Adrenal gland (tissue), 19 donors: ENCODE measurements at regions of chr2 and their contacts with region 1.

Region 1: DNA sequence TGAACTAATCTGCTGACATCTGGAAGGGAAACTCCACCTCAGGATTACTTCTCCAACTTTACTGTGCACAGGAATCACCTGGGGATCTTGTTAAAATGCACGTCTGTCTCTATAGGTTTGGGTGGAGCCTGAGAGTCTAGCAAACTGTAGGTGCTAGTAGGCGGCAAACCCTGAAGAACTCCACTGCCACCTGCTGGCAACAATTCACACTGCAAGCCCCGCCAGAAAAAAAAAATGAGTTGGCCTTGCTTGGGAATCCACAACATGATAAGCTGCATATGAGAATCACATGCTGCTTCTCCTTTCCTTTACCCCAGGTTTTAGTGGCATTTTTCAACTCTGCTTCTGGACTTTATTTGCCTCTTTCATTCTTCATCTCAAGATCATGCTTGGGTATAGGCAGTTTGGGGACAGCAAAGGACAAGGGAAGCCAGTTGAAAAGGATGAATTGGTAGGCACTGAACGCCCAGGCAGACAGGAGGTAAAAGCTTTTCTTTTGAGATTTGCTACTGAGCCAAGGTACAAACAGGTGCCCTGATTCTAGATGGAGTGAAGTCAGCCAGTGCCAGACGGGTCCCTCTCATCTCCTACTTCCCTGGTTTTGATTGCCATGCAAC is 88.8 kb downstream of the VIT start:
- DNase-seq: peak; percentile 46 to 85 (median 64)
- H3K4me3 ChIP-seq: no peak overlapping the region
- H3K27ac ChIP-seq: no peak overlapping the region
- H3K4me1 ChIP-seq: no peaks in the 10 kb centered on the region
- H3K27me3 ChIP-seq: peaks cover 4% of the 10 kb centered on the region
- CTCF ChIP-seq: peak; percentile 86 to 97 (median 90)
- POLR2A ChIP-seq: no peak

Region 2: GRCh38 chr2:36993841-36994620 is 208.7 kb after region 1 on chr2:
- intact Hi-C with region 1: loop called in 1 of 2 experiments (anchors 10 kb)
- DNase-seq: no peak
- H3K4me3 ChIP-seq: no peak overlapping the region
- H3K27ac ChIP-seq: no peak overlapping the region
- H3K4me1 ChIP-seq: no peaks in the 10 kb centered on the region
- H3K27me3 ChIP-seq: no peaks in the 10 kb centered on the region
- CTCF ChIP-seq: no peak
- POLR2A ChIP-seq: no peak